T-cell (primary cell): ENCODE measurements at regions of chr2 and their contacts with region 1.

Region 1: DNA sequence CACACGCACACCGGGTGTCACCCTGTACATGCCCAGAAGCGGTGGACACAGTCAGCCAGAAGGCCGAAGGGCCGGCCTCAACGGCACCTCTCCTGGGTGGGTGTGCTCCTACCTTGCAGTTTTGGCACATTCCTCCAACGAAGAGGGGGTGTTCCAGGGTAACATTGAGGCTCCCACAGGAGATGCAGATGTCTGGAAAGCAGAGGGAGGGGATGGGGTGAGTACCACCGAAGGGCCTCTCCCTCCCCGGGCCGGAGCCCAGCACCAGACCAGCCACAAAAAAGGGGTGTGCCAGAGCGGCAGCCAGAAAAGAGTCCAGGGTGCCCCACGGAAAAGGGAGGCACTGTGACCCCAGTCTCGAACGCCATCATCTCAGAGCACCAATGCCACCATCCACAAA is 76.8 kb upstream of the POMC start:
- DNase-seq: no peak
- ATAC-seq: no peak
- H3K4me3 ChIP-seq: no peak overlapping the region
- H3K4me3 Mint-ChIP-seq: no peak overlapping the region
- H3K27ac ChIP-seq: no peak overlapping the region
- H3K27ac Mint-ChIP-seq: no peak overlapping the region
- H3K4me1 ChIP-seq: peaks cover 1 to 6% of the 10 kb centered on the region in 2 experiments
- H3K4me1 Mint-ChIP-seq: peaks cover 11 to 13% (median 13%) of the 10 kb centered on the region in 3 donors
- H3K27me3 ChIP-seq: no peaks in the 10 kb centered on the region
- H3K27me3 Mint-ChIP-seq: no peaks in the 10 kb centered on the region

Region 2: DNA sequence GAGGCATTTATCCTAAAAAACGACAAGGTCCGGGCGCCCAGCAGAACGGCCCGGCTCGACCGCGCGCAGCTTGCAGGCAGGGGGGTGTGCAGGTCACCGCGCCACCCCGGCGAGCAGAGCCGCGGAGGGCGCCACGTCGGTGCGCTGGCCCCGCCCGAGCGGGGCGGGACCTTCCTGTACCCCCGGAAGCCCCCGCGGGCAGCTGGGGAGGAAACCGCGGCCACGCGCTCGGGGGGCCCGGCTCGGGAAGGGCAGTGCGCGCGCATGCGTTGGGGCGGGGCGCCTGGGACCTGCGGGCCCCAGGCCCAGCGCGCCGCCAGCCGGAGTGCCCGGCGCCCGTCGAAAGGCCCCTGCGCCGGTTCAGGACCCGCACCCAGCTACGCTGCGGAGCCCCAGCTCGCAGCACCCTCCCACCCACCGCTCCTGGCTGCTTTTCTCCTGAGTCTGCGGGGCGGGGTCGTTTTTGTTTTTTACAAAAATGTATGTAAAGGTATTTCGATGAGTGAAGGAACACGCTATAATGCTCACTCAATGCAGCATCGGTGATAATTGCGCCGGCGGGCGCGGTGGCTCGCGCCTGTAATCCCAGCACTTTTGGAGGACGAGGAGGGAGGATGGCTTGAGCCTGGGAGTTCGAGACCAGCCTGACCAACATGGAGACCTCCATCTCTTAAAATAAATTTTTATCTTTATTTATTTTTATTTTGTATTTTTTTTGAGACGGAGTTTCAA is 29.0 kb before region 1 on chr2:
- CTCF ChIA-PET with region 1: no interaction called
- POLR2A ChIA-PET with region 1: no interaction called
- DNase-seq: peak; percentile 69 to 92 (median 81)
- ATAC-seq: peak; percentile 94 to 96 (median 96)
- H3K4me3 ChIP-seq: peak overlapping the region; percentile 19 to 53
- H3K4me3 Mint-ChIP-seq: peak overlapping the region; percentile 66 to 78 (median 73)
- H3K27ac ChIP-seq: peak overlapping the region; percentile 65
- H3K27ac Mint-ChIP-seq: peak overlapping the region; percentile 88 to 91
- H3K4me1 ChIP-seq: peaks cover 0 to 21% of the 10 kb centered on the region in 2 experiments
- H3K4me1 Mint-ChIP-seq: peaks cover 15 to 26% (median 24%) of the 10 kb centered on the region in 3 donors
- H3K27me3 ChIP-seq: no peaks in the 10 kb centered on the region
- H3K27me3 Mint-ChIP-seq: no peaks in the 10 kb centered on the region

Region 3: GRCh38 chr2:25523060-25523459 is 277.9 kb after region 1 on chr2:
- CTCF ChIA-PET with region 1: interaction called in 1 of 2 experiments, 13 read pairs
- POLR2A ChIA-PET with region 1: no interaction called
- DNase-seq: no peak
- ATAC-seq: no peak
- H3K4me3 ChIP-seq: no peak overlapping the region
- H3K4me3 Mint-ChIP-seq: no peak overlapping the region
- H3K27ac ChIP-seq: no peak overlapping the region
- H3K27ac Mint-ChIP-seq: peak overlapping the region in 1 of 2 donors; percentile 68
- H3K4me1 ChIP-seq: peaks cover 6 to 10% of the 10 kb centered on the region in 2 experiments
- H3K4me1 Mint-ChIP-seq: peaks cover 9 to 11% (median 10%) of the 10 kb centered on the region in 3 donors
- H3K27me3 ChIP-seq: no peaks in the 10 kb centered on the region
- H3K27me3 Mint-ChIP-seq: no peaks in the 10 kb centered on the region